ENCODE measurements at regions of chr3 and their contacts with region 1.

Region 1: DNA sequence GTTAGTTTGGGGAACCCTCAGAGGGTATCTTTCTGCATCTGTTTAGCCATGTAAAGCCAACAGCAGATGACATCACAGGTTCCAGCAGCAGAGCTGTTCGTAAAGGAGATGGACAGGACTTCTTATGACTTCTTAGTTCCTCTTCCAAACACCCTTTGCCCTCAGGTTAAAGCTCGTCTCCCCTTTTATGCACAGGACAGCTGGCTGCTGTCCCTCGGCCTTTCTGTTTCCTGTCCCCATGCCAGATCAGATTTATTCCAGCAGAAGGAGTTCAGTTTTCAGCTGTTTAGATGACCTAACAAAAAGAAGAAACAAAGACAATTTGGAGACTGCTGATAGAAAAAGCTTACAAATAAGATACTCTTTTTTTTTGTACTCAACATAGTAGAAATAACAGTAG is 45.1 kb downstream of the SEC22A start:
- DNase-seq: peak; percentile 23 to 77 (median 61)
- ATAC-seq: peak; percentile 90 to 92 (median 91)
- H3K4me3 ChIP-seq: no peak overlapping the region
- H3K27ac ChIP-seq: no peak overlapping the region
- H3K4me1 ChIP-seq: peaks cover 0 to 29% (median 11%) of the 10 kb centered on the region in 4 donors
- H3K27me3 ChIP-seq: no peaks in the 10 kb centered on the region
- CTCF ChIP-seq: no peak
- POLR2A ChIP-seq: no peak

Region 2: GRCh38 chr3:123081718-123082369 is 165.0 kb before region 1 on chr3:
- intact Hi-C with region 1: no loop called
- DNase-seq: peak in 1 of 3 donors; percentile 39
- ATAC-seq: no peak
- H3K4me3 ChIP-seq: no peak overlapping the region
- H3K27ac ChIP-seq: peak overlapping the region in 2 of 3 donors; percentile 5 to 35
- H3K4me1 ChIP-seq: peaks cover 0 to 94% (median 31%) of the 10 kb centered on the region in 4 donors
- H3K27me3 ChIP-seq: no peaks in the 10 kb centered on the region
- CTCF ChIP-seq: no peak
- POLR2A ChIP-seq: no peak

Region 3: GRCh38 chr3:123201566-123202427 is 45.1 kb before region 1 on chr3 and contains the start of gene SEC22A:
- intact Hi-C with region 1: loop called in 1 of 2 experiments (anchors 5 kb)
- DNase-seq: peak; percentile 95 to 97 (median 96)
- ATAC-seq: peak; percentile 99 to 100 (median 100)
- H3K4me3 ChIP-seq: peak within 1 kb of the TSS; percentile 92 to 99 (median 95)
- H3K27ac ChIP-seq: peak within 1 kb of the TSS; percentile 80 to 88 (median 87)
- H3K4me1 ChIP-seq: peaks cover 0 to 12% (median 0%) of the 10 kb centered on the region in 4 donors
- H3K27me3 ChIP-seq: no peaks in the 10 kb centered on the region
- CTCF ChIP-seq: no peak
- POLR2A ChIP-seq: peak; percentile 74
- total RNA-seq, gene SEC22A: 7.5 to 24.9 (median 11.0) TPM

Measured in right lobe of liver (tissue), 6 donors.